Right ventricle myocardium inferior (tissue), 1 donor: ENCODE measurements at regions of chrX and their contacts with region 1.

Region 1: DNA sequence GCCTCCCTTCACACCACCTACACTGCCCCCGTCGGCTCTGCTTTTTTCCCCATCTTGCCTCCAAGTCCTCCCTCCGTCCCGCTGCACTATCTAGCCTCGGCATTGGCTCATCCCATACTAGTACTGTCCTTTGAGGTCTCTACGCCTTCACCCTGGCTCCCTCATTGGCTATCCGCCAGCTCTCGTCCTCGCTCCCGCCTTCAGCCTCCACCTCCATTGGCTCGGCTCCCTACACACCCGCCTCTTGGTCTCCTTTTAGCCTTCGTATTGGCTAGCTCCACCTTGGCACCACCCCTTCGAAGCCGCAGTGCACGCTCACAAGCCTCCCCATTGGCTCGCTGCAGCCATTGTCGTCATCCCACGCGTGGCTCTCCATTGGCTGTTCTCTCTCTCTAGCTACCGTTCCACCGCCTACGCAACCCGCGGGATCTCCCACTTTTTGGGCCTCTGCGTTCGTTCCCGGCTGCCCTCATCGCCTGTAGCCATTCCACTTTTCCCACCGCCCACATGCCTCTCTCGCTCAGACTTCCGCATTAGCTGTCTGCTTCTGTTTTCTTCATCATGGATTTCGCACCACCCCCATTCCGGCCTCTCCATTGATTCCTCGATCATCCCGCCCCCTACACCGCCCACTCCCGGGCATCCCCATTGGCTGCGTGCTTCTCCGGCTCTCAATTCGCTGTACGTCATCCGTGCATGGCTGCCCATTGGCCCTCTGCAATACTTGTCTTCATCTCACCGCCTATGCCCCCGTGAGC is 404 bp upstream of the PPP1R3F start:
- DNase-seq: peak; percentile 98
- ATAC-seq: peak; percentile 96

Region 2: GRCh38 chrX:49199906-49200771 is 69.0 kb before region 1 on chrX and contains the start of gene SYP:
- intact Hi-C with region 1: loop called (anchors 5 kb)
- DNase-seq: peak; percentile 92
- ATAC-seq: peak; percentile 97
- total RNA-seq, gene SYP: 1.8 TPM